Activated CD4-positive, alpha-beta T cell treated with anti-CD3 and anti-CD28 coated beads, Interleukin-2, amount 10 ng/mL, durations not matched to agents 24 days and 14 days (primary cell): ENCODE measurements at regions of chr21 and their contacts with region 1.

Region 1: GRCh38 chr21:43667191-43667904 is 8.0 kb downstream of the RRP1B start:
- DNase-seq: no peak
- H3K4me3 Mint-ChIP-seq: no peak overlapping the region
- H3K27ac Mint-ChIP-seq: peak overlapping the region; percentile 17
- H3K4me1 Mint-ChIP-seq: peaks cover 32% of the 10 kb centered on the region
- H3K27me3 Mint-ChIP-seq: no peaks in the 10 kb centered on the region

Region 2: GRCh38 chr21:43728467-43729390 is 61.4 kb after region 1 on chr21:
- intact Hi-C with region 1: loop called (anchors 5 kb)
- DNase-seq: peak; percentile 92
- H3K4me3 Mint-ChIP-seq: peak overlapping the region; percentile 89
- H3K27ac Mint-ChIP-seq: peak overlapping the region; percentile 87
- H3K4me1 Mint-ChIP-seq: peaks cover 53% of the 10 kb centered on the region
- H3K27me3 Mint-ChIP-seq: no peaks in the 10 kb centered on the region

Region 3: GRCh38 chr21:43789276-43790009 is 122.1 kb after region 1 on chr21 and contains the start of gene RRP1:
- intact Hi-C with region 1: loop called (anchors 10 kb)
- DNase-seq: peak; percentile 99
- H3K4me3 Mint-ChIP-seq: peak within 1 kb of the TSS; percentile 93
- H3K27ac Mint-ChIP-seq: peak within 1 kb of the TSS; percentile 90
- H3K4me1 Mint-ChIP-seq: peaks cover 20% of the 10 kb centered on the region
- H3K27me3 Mint-ChIP-seq: no peaks in the 10 kb centered on the region
- total RNA-seq, gene RRP1: 94.4 and 99.4 TPM in 2 replicates